ENCODE measurements at regions of chr2 and their contacts with region 1.

Region 1: DNA sequence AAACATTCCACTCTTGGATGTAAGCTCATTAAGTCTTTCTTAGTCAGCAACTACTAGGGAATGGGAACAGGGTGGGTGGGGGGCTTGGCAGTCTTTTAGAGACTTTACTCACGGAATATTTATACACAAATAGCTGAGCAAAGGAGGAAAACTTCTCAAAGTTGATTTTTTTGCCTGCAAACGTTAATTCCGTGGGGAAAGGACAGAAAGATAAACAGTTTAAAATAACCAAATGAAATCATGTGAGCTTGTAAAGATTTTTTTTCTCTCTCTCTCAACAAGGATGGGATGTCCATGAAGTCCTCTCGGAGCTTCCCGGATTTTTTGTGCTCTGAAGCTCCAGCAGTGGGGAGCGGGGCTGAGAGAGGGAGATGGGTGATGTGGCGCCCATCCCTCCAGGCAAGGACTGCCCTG is 32.2 kb upstream of the MAT2A start:
- DNase-seq: peak; percentile 65
- H3K4me3 ChIP-seq: no peak overlapping the region
- H3K27me3 ChIP-seq: no peaks in the 10 kb centered on the region
- CTCF ChIP-seq: no peak

Region 2: GRCh38 chr2:85457877-85458316 is 48.9 kb before region 1 on chr2:
- CTCF ChIA-PET with region 1: no interaction called
- POLR2A ChIA-PET with region 1: no interaction called
- DNase-seq: no peak
- H3K4me3 ChIP-seq: no peak overlapping the region
- H3K27me3 ChIP-seq: peaks cover 3% of the 10 kb centered on the region
- CTCF ChIP-seq: no peak

Region 3: GRCh38 chr2:85470850-85471800 is 35.6 kb before region 1 on chr2:
- CTCF ChIA-PET with region 1: interaction called, 6 read pairs
- POLR2A ChIA-PET with region 1: interaction called, 17 read pairs
- DNase-seq: no peak
- H3K4me3 ChIP-seq: no peak overlapping the region
- H3K27me3 ChIP-seq: no peaks in the 10 kb centered on the region
- CTCF ChIP-seq: no peak

Region 4: GRCh38 chr2:85496436-85496835 is 10.3 kb before region 1 on chr2:
- CTCF ChIA-PET with region 1: no interaction called
- POLR2A ChIA-PET with region 1: no interaction called
- DNase-seq: no peak
- H3K4me3 ChIP-seq: no peak overlapping the region
- H3K27me3 ChIP-seq: no peaks in the 10 kb centered on the region
- CTCF ChIP-seq: no peak

Region 5: DNA sequence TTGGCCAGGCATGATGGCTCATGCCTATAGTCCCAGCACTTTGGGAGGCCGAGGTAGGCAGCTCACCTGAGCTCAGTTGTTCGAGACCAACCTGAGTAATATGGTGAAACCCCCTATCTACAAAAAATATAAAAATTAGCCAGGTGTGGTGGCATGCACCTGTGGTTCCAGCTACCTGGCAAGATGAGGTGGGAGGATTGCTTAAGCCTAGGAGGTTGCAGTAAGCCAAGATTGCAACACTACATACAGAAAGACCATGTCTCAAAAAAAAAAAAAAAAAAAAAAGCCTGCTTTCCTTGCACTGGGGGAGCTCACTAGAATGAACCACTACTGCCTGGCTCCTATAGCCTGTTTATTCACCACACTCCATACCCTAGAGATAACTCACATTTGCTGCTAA is 24.8 kb after region 1 on chr2:
- CTCF ChIA-PET with region 1: interaction called, 6 read pairs
- POLR2A ChIA-PET with region 1: interaction called, 10 read pairs
- DNase-seq: no peak
- H3K4me3 ChIP-seq: no peak overlapping the region
- H3K27me3 ChIP-seq: peaks cover 2% of the 10 kb centered on the region; the same call in 1 of the 2 replicates
- CTCF ChIP-seq: no peak

Measured in BJ (cell line).